ENCODE measurements at regions of chr14 and their contacts with region 1.

Region 1: DNA sequence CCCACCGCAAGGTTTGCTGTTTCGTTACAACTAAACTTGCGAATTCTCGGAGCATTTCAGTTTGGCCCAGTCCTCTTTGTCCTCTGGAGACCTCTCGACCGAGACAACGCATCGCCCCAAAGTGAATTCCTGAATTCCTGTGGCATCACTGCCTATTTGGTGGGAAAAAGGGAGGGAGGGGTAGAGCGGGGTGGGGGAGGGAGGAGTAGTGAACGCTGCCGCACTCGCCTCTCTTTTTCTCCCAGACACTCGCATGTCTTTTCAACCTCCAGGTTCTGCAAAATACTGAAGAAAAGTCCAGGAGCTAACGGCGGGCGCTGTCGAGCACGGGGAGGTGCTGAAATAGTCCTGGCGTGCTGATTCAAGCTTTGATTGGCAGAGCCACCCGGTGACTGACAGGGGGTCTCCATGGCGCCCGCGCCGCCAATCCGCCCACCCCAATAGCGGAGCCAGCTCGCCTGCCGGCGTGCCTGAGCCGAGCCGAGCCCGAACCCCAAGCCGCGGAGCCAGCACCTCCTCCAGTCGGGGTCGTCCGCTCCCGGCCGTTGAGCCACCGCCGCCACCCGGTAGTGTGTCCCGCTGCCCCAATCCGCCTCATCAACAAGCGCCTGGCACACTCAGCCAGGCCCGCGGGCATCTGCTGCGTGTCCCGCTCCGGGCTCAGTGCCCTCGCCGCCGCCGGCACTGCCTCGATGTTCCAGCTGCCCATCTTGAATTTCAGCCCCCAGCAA is at the start of gene SIX6:
- DNase-seq: no peak
- ATAC-seq: no peak
- H3K4me3 ChIP-seq: no peak within 1 kb of the TSS
- H3K4me3 Mint-ChIP-seq: peak within 1 kb of the TSS in 9 of 10 donors; percentile 5 to 77 (median 43)
- H3K27ac ChIP-seq: no peak within 1 kb of the TSS
- H3K27ac Mint-ChIP-seq: peak within 1 kb of the TSS in 1 of 9 donors; percentile 62
- H3K4me1 ChIP-seq: peaks cover 0 to 20% of the 10 kb centered on the region in 2 donors
- H3K4me1 Mint-ChIP-seq: peaks cover 3 to 39% (median 29%) of the 10 kb centered on the region in 7 donors
- H3K27me3 ChIP-seq: peaks cover 10 to 43% of the 10 kb centered on the region in 2 donors
- H3K27me3 Mint-ChIP-seq: peaks cover 74 to 92% (median 81%) of the 10 kb centered on the region in 5 donors
- total RNA-seq, gene SIX6: not detected

Region 2: DNA sequence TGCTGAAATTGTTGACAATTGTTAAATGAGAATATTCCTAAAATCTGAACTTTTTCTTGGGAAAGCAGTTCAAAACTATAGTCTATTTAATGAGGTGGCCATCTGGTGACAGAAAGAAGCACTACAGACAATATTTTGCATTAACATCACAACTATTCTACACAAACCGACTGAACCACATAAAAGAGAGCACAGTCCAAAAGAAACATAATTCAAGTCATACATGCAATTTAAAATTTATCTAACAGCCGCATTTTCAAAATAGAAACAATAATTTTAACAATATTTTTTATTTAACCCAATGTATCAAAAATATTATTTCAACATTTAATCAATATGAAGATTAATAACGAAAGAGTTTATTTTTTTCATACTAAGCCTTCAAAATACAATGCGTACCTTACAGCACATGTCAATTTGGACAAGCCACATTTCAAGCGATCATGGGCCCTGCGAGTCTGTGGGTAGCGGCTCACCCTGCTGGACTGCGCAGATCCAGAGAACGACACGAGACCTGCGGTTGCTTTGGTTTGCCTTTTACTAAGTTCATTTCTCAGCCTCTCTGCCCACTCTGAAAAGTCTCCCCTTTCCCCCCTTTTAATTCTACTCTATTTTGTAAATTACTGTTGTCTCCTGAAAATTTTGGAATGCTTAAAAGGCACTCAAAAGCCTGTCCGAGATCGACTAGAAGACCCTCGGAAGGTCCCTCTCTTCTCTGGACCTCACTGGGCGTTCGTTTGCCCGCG is 589.9 kb before region 1 on chr14:
- CTCF ChIA-PET with region 1: no interaction called
- POLR2A ChIA-PET with region 1: no interaction called
- intact Hi-C with region 1: no loop called
- DNase-seq: peak in 4 of 9 donors; percentile 7 to 23 (median 19)
- ATAC-seq: peak; percentile 54
- H3K4me3 ChIP-seq: peak overlapping the region; percentile 47
- H3K4me3 Mint-ChIP-seq: peak overlapping the region; percentile 47 to 81 (median 76)
- H3K27ac ChIP-seq: no peak overlapping the region
- H3K27ac Mint-ChIP-seq: no peak overlapping the region
- H3K4me1 ChIP-seq: peaks cover 3 to 7% of the 10 kb centered on the region in 2 donors
- H3K4me1 Mint-ChIP-seq: peaks cover 0 to 19% (median 8%) of the 10 kb centered on the region in 7 donors
- H3K27me3 ChIP-seq: peaks cover 0 to 3% of the 10 kb centered on the region in 2 donors
- H3K27me3 Mint-ChIP-seq: peaks cover 34 to 65% (median 56%) of the 10 kb centered on the region in 5 donors

Region 3: GRCh38 chr14:60311417-60311816 is 197.5 kb before region 1 on chr14:
- CTCF ChIA-PET with region 1: no interaction called
- POLR2A ChIA-PET with region 1: no interaction called
- intact Hi-C with region 1: no loop called
- DNase-seq: no peak
- ATAC-seq: peak; percentile 18
- H3K4me3 ChIP-seq: no peak overlapping the region
- H3K4me3 Mint-ChIP-seq: no peak overlapping the region
- H3K27ac ChIP-seq: no peak overlapping the region
- H3K27ac Mint-ChIP-seq: no peak overlapping the region
- H3K4me1 ChIP-seq: no peaks in the 10 kb centered on the region
- H3K4me1 Mint-ChIP-seq: no peaks in the 10 kb centered on the region
- H3K27me3 ChIP-seq: no peaks in the 10 kb centered on the region
- H3K27me3 Mint-ChIP-seq: peaks cover 4 to 22% (median 16%) of the 10 kb centered on the region in 5 donors

Region 4: GRCh38 chr14:60485598-60486251 is 23.1 kb before region 1 on chr14 and contains the start of gene C14orf39:
- CTCF ChIA-PET with region 1: no interaction called
- POLR2A ChIA-PET with region 1: no interaction called
- intact Hi-C with region 1: loop called in 1 of 2 experiments (anchors 2 kb)
- DNase-seq: no peak
- ATAC-seq: no peak
- H3K4me3 ChIP-seq: no peak within 1 kb of the TSS
- H3K4me3 Mint-ChIP-seq: peak within 1 kb of the TSS in 9 of 10 donors; percentile 9 to 55 (median 33)
- H3K27ac ChIP-seq: no peak within 1 kb of the TSS
- H3K27ac Mint-ChIP-seq: no peak within 1 kb of the TSS
- H3K4me1 ChIP-seq: no peaks in the 10 kb centered on the region
- H3K4me1 Mint-ChIP-seq: peaks cover 0 to 8% (median 3%) of the 10 kb centered on the region in 7 donors
- H3K27me3 ChIP-seq: peaks cover 0 to 17% of the 10 kb centered on the region in 2 donors
- H3K27me3 Mint-ChIP-seq: peaks cover 13 to 45% (median 35%) of the 10 kb centered on the region in 5 donors
- total RNA-seq, gene C14orf39: not detected

Region 5: DNA sequence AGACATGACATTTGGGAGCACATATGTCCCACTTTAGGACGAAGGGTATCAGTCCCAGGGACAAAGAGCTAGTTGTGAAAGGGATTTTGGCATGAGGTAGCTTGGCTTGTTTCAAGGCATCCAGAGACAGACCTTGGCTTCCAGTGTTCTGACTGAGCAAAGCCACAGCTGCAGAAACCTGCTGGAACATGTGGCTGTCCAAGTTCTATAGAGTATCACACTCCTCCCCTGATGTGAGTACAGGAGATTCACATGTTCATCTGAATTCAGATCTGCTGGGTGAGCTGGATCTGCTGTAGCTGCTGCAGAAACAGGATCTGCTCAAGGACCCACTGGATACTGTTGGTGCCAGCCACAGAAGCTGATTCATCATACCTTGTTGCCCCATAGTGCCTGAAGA is 12.9 kb before region 1 on chr14:
- CTCF ChIA-PET with region 1: no interaction called
- POLR2A ChIA-PET with region 1: no interaction called
- intact Hi-C with region 1: no loop called
- DNase-seq: no peak
- ATAC-seq: no peak
- H3K4me3 ChIP-seq: no peak overlapping the region
- H3K4me3 Mint-ChIP-seq: no peak overlapping the region
- H3K27ac ChIP-seq: no peak overlapping the region
- H3K27ac Mint-ChIP-seq: no peak overlapping the region
- H3K4me1 ChIP-seq: no peaks in the 10 kb centered on the region
- H3K4me1 Mint-ChIP-seq: no peaks in the 10 kb centered on the region
- H3K27me3 ChIP-seq: peaks cover 0 to 3% of the 10 kb centered on the region in 2 donors
- H3K27me3 Mint-ChIP-seq: peaks cover 6 to 60% (median 37%) of the 10 kb centered on the region in 5 donors

Region 6: DNA sequence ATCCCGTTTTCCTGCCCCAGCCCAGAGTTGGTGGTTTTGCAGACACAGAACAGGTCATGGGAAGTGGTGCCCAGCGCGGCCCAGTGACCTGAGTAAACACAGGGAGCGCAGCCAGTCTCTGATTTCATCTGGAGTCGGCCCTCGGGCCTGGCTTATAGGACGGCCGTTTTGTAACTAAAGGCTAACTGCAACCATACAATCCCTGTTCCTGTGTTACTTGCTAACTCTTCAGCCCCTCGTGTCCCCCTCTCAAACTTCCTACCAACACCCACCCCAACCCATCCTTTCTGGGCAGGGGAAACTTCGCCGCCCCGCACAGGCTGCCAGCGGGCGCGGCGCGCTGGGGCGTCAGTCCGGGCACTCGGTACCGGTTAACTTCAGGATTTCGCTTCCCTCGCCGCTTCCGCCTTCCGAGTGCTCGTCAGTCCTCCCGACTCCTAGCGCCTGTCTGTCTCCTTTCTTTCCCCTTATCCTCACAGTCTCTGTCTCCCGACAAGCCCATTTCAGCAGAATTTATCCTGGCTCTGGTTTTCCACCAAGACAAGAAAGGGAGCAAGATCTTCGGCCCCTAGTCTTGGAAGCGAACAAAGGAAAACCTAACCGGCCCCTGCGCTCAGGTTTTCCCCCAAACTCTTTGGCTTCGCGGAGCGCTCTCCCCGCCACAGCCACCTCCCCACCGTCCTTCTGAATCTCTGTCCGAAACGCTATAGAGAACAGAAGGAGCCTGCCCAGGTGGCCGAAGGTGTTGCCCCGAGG is 138.4 kb after region 1 on chr14:
- CTCF ChIA-PET with region 1: no interaction called
- POLR2A ChIA-PET with region 1: no interaction called
- intact Hi-C with region 1: loop called in 1 of 2 experiments (anchors 2 kb)
- DNase-seq: peak in 1 of 9 donors; percentile 37
- ATAC-seq: no peak
- H3K4me3 ChIP-seq: no peak overlapping the region
- H3K4me3 Mint-ChIP-seq: peak overlapping the region; percentile 55 to 76 (median 68)
- H3K27ac ChIP-seq: no peak overlapping the region
- H3K27ac Mint-ChIP-seq: peak overlapping the region in 1 of 9 donors; percentile 21
- H3K4me1 ChIP-seq: peaks cover 0 to 22% of the 10 kb centered on the region in 2 donors
- H3K4me1 Mint-ChIP-seq: peaks cover 18 to 59% (median 46%) of the 10 kb centered on the region in 7 donors
- H3K27me3 ChIP-seq: peaks cover 0 to 32% of the 10 kb centered on the region in 2 donors
- H3K27me3 Mint-ChIP-seq: peaks cover 82 to 94% (median 84%) of the 10 kb centered on the region in 5 donors

Measured in naive thymus-derived CD4-positive, alpha-beta T cell (primary cell).